Endothelial cell of umbilical vein (primary cell): ENCODE measurements at regions of chr6 and their contacts with region 1.

Region 1: DNA sequence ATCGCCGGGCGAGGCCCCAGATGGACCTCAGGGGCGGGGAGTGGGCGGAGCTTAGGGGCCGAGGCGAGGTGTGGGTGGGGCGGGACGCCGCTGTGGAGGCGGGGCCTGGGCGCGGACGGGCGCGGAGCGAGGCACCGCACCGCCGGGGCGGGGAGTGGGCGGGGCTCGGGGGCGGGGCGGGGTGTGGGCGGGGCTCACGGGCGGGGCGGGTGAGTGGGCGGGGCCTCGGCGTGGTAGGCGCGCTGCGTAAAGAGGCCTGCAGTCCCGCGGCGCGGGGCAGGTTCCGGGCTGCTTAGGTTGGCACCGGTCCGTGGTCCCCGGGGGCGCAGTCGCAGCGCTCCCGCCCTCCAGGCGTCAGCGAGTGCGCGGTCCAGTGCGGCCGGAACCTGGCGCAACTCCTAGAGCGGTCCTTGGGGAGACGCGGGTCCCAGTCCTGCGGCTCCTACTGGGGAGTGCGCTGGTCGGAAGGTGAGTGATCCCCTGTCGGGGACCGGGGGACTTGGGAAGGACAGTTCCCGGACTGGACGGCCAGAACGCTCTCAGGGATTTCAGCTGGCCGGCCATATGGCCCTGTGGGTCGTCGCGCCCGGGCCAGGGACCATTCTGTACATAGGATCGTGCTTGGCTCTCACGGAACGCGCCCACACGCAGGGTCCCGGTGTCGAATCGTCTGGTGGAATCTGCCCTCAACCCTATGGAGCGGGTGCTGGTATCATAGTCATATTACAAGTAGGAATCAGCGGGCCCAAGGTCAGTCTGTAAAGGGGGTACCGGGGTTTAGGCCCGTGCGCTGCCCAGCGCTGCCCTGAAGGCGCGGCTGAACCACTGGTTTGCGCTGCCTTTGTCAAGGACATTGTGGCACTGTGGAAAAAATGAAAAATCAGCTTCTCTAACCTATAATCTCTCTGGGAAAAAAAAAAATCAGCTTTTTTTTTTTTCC is at the start of gene NQO2:
- DNase-seq: peak; percentile 86
- H3K4me3 ChIP-seq: peak within 1 kb of the TSS; percentile 51 to 66 (median 62)
- H3K27ac ChIP-seq: peak within 1 kb of the TSS; percentile 70
- H3K4me1 ChIP-seq: peaks cover 16% of the 10 kb centered on the region
- H3K27me3 ChIP-seq: no peaks in the 10 kb centered on the region
- CTCF ChIP-seq: no peak
- POLR2A ChIP-seq: peak; percentile 72
- total RNA-seq, gene NQO2: 27.6 and 31.6 TPM in 2 replicates

Region 2: DNA sequence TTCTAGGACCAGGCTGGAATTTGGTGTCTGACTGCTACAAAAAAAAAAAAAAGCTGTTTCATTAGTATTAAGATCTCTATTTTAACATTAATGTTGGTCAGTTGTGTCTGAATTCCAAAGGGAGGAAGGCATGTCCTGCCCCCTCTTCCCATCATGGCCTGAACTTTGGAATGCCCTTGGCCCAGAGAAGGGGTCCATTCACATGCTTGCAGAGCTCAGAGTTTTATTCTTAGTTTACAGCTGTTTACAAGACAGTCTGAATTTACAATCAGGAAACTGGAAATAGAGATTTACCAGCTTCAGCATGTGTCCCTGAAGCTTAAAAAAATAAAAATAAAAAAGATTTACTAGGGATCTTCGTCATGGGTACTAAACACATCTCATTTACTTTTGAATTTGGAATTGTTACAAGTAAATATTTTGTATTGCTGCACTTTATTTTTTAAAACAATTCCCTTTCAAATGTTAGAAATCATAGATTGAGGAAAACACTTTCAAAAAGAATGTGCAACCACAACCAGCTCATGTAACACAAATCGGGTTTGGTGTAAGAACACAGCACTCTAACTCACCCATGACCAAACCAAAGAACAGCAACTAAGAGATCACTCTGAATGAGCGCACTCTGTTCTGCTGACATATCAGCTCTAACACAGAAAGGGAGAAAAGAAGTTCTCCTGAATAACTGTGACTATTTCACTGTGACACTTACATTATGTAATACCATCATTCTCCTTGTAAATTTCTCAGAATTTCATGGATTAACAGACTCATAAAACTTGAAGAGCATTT is 21.9 kb before region 1 on chr6:
- CTCF ChIA-PET with region 1: no interaction called
- POLR2A ChIA-PET with region 1: no interaction called
- dilution Hi-C with region 1: no loop called
- intact Hi-C with region 1: no loop called
- DNase-seq: no peak
- H3K4me3 ChIP-seq: no peak overlapping the region
- H3K27ac ChIP-seq: no peak overlapping the region
- H3K4me1 ChIP-seq: peaks cover 38% of the 10 kb centered on the region
- H3K27me3 ChIP-seq: no peaks in the 10 kb centered on the region
- CTCF ChIP-seq: no peak
- POLR2A ChIP-seq: no peak

Region 3: DNA sequence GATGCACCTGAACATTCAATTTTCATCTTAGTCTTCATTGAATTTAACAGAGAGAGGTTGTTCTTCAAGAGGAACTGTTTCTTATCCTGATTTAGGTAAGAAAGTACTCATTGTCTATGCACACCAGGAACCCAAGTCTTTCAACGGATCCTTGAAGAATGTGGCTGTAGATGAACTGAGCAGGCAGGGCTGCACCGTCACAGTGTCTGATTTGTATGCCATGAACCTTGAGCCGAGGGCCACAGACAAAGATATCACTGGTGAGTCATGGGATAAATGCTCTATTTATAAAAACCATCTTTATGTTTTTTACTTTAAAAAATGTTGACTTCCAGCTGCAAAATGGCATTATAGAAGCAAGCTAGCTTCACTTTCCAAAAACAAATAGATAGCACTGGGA is 10.0 kb after region 1 on chr6:
- CTCF ChIA-PET with region 1: interaction called, 25 read pairs
- POLR2A ChIA-PET with region 1: no interaction called
- dilution Hi-C with region 1: no loop called
- intact Hi-C with region 1: no loop called
- DNase-seq: no peak
- H3K4me3 ChIP-seq: no peak overlapping the region
- H3K27ac ChIP-seq: no peak overlapping the region
- H3K4me1 ChIP-seq: peaks cover 6% of the 10 kb centered on the region
- H3K27me3 ChIP-seq: no peaks in the 10 kb centered on the region
- CTCF ChIP-seq: no peak
- POLR2A ChIP-seq: no peak

Region 4: GRCh38 chr6:3039384-3039783 is 39.5 kb after region 1 on chr6:
- CTCF ChIA-PET with region 1: interaction called, 14 read pairs
- POLR2A ChIA-PET with region 1: interaction called, 3 read pairs
- dilution Hi-C with region 1: no loop called
- intact Hi-C with region 1: no loop called
- DNase-seq: peak; percentile 23
- H3K4me3 ChIP-seq: no peak overlapping the region
- H3K27ac ChIP-seq: no peak overlapping the region
- H3K4me1 ChIP-seq: peaks cover 3% of the 10 kb centered on the region
- H3K27me3 ChIP-seq: no peaks in the 10 kb centered on the region
- CTCF ChIP-seq: no peak
- POLR2A ChIP-seq: no peak

Region 5: GRCh38 chr6:3052481-3053230 is 52.8 kb after region 1 on chr6:
- CTCF ChIA-PET with region 1: interaction called, 126 read pairs
- POLR2A ChIA-PET with region 1: interaction called, 3 read pairs
- dilution Hi-C with region 1: no loop called
- intact Hi-C with region 1: loop called (anchors 1 kb)
- DNase-seq: no peak
- H3K4me3 ChIP-seq: no peak overlapping the region
- H3K27ac ChIP-seq: no peak overlapping the region
- H3K4me1 ChIP-seq: peaks cover 9% of the 10 kb centered on the region
- H3K27me3 ChIP-seq: peaks cover 3 to 8% of the 10 kb centered on the region in 2 experiments
- CTCF ChIP-seq: no peak
- POLR2A ChIP-seq: no peak

Region 6: DNA sequence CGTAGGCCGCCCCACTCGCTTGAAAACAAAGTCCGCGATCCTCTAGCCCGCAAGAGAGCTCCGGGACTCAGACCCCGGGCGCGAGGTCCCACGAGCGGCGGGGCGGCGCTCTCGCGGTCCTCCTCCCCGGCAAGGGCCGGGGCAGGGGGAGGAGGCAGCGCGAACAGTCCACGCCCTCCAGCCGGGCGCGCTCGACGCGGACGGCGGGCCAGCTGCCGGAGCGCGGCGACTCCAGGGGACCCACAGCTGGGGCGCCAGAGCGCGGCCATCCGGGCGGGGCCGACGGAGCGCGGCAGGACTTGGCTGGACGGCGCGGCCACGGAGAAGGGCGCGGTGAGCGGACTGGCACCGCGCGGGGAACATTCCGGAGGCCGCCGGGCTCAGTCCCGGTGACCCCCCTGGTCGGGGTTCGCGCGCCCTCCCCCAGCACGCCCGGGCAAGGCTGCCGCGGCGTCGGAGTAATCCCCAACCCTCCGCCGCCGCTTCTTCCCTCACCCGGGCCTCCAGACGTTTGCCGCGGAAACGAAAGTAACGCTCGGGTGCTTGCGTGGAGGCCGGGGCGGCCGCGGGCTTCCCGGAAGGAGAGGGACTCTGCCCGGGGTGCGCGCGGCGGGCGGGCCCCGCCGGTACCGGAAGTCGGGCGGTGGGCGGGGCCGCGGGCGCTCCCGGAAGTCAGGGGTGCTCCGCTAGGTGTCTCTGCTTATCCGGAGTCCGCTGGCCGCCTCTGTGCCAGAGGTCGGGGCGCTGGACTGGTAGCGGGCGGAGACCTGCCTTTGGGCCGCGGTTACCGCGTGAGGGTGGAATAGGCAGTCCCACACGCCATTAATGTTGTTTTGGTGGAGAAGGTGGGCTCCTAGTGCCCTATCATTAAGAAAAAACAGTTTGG is 68.7 kb after region 1 on chr6 and contains the start of gene RIPK1:
- CTCF ChIA-PET with region 1: interaction called, 16 read pairs
- POLR2A ChIA-PET with region 1: no interaction called
- dilution Hi-C with region 1: no loop called
- intact Hi-C with region 1: no loop called
- DNase-seq: peak; percentile 82
- H3K4me3 ChIP-seq: peak within 1 kb of the TSS; percentile 66 to 92 (median 78)
- H3K27ac ChIP-seq: peak within 1 kb of the TSS; percentile 73
- H3K4me1 ChIP-seq: peaks cover 9% of the 10 kb centered on the region
- H3K27me3 ChIP-seq: peaks cover 0 to 7% of the 10 kb centered on the region in 2 experiments
- CTCF ChIP-seq: peak in 1 of 2 donors; percentile 14
- POLR2A ChIP-seq: peak; percentile 78
- total RNA-seq, gene RIPK1: 20.2 and 20.6 TPM in 2 replicates

Region 7: GRCh38 chr6:3162565-3163247 is 162.8 kb after region 1 on chr6:
- CTCF ChIA-PET with region 1: no interaction called
- POLR2A ChIA-PET with region 1: no interaction called
- dilution Hi-C with region 1: no loop called
- intact Hi-C with region 1: loop called (anchors 2 kb)
- DNase-seq: peak; percentile 70
- H3K4me3 ChIP-seq: peak overlapping the region; percentile 46 to 64 (median 62)
- H3K27ac ChIP-seq: peak overlapping the region; percentile 63
- H3K4me1 ChIP-seq: peaks cover 30% of the 10 kb centered on the region
- H3K27me3 ChIP-seq: no peaks in the 10 kb centered on the region
- CTCF ChIP-seq: peak in 1 of 2 donors; percentile 19
- POLR2A ChIP-seq: peak; percentile 34

Region 8: DNA sequence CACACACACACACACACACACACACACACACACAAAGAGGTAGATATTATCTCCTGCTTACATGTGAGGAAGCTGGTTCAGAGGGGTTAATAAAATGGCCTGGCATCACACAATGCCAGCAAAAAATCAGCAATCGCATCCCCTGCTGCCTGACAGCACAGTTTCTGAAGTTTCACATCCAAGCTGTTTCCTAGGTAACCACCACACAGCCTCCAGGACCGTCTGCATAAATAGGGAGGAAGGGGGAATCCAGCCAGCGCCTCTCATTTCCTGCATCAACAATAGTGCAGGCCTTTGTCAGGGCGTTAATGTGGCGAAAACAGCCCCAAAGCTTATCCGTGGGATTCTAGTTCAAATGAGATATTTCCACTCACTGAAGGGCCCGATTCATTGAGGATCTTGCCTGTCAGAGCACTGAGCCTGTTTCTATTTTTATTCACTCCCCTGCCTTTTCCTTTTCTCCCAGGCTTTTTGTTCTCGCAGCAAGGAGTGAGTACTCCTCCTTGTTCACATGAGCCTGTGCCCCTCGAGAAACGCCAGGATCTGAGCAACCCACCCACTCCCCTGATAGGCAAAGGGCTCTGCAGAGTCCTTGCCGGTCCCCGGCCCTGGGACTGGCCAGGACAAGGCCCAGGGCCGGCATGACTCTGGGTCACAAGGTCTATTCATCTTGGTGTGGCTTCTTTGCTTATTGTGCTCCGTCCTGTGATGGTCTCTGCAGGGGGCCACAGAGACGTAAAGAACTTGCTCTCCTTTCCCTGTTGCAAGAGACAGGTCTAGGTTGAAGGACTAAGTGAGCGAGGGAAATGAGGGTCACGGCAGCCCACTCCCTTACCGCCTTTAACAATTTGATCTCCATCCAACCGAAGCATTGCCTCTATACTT is 194.9 kb after region 1 on chr6:
- CTCF ChIA-PET with region 1: no interaction called
- POLR2A ChIA-PET with region 1: no interaction called
- dilution Hi-C with region 1: no loop called
- intact Hi-C with region 1: no loop called
- DNase-seq: peak; percentile 74
- H3K4me3 ChIP-seq: no peak overlapping the region
- H3K27ac ChIP-seq: no peak overlapping the region
- H3K4me1 ChIP-seq: peaks cover 7% of the 10 kb centered on the region
- H3K27me3 ChIP-seq: peaks cover 0 to 2% of the 10 kb centered on the region in 2 experiments
- CTCF ChIP-seq: no peak
- POLR2A ChIP-seq: no peak

Region 9: DNA sequence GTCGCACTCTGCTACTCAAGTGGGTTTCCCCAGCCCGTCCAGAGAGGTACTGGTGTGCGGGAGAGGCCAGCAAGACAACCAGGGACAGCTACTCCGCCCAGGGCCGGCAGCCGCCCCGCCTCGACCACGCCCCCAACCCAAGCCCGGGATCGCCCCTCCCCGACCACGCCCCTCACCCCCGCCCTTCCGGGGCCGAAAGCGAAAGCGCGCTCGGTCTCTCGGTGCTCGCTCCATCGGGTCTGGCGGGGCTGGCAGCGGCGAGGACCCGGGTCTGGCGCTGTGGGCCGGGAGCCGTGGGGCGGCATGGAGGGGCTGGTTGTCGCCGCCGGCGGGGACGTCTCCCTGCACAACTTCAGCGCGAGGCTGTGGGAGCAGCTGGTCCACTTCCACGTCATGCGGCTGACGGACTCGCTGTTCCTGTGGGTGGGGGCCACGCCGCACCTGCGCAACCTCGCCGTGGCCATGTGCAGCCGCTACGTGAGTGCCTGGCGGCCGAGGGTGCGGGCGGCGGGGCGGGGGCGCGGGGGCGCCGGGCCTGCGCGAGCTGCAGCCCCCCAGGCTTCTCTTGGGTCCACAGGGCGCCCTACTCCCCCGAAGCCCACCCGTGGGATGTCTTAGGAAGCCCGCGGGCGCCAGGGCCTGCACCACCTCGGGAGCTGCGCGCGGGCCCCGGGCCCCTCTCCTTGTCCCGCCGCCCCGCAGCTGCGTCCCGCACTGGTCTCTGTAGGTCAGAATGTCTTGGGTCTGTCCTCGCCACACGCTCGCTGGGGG is 259.0 kb after region 1 on chr6 and contains the start of gene PSMG4:
- CTCF ChIA-PET with region 1: no interaction called
- POLR2A ChIA-PET with region 1: no interaction called
- dilution Hi-C with region 1: no loop called
- intact Hi-C with region 1: loop called (anchors 2 kb)
- DNase-seq: peak; percentile 84
- H3K4me3 ChIP-seq: peak within 1 kb of the TSS; percentile 36 to 98 (median 41)
- H3K27ac ChIP-seq: peak within 1 kb of the TSS; percentile 10
- H3K4me1 ChIP-seq: peaks cover 7% of the 10 kb centered on the region
- H3K27me3 ChIP-seq: peaks cover 4 to 5% of the 10 kb centered on the region in 2 experiments
- CTCF ChIP-seq: no peak
- POLR2A ChIP-seq: peak; percentile 81
- total RNA-seq, gene PSMG4: 31.1 and 31.4 TPM in 2 replicates